OCI-LY7 (cell line): ENCODE measurements at regions of chr10 and their contacts with region 1.

Region 1: GRCh38 chr10:97334370-97335175 is at the start of gene FRAT2:
- DNase-seq: peak; percentile 93
- H3K4me3 ChIP-seq: peak within 1 kb of the TSS; percentile 76
- H3K27ac ChIP-seq: peak within 1 kb of the TSS; percentile 54
- H3K4me1 ChIP-seq: peaks cover 48% of the 10 kb centered on the region
- CTCF ChIP-seq: no peak
- total RNA-seq, gene FRAT2: 9.3 and 12.3 TPM in 2 replicates

Region 2: DNA sequence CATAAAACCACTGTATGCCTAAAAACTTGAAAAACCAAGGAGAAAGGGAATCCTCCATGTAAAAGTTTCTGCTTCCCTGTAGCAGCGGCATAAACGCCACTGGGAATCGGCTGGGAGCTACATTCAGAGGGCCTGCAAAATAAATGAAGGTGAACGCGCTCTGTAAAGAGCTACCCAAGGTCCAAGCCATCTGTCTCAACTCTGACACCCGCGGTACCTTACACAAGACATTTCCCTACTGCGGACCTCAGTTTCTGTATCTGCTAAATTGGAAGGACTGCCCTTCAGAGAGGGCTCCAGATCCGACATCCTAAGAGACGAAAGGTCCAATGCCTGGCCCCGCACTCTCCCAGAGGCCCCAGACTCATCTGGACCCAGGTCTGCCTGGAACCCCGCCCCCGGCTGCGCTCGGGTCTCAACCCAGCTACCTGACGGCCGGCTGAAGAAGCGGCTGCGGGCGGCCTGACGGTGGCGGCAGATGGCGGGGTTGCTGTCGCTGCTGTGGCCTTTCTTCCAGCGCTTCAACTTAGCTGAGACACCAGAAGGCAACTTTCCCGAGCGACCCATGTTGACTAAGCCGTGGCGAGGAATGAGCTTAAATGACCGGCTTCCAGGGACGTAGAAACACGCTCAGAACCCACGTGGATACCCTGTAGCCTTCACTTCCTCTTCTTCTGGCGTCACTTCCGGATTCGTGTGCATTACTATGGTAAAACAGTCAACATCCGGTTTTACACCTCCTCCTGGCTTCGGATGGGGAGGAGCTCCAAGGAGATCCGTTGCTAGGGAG is 66.3 kb after region 1 on chr10 and contains the start of gene RRP12:
- CTCF ChIA-PET with region 1: no interaction called
- POLR2A ChIA-PET with region 1: interaction called, 6 read pairs
- intact Hi-C with region 1: loop called (anchors 5 kb)
- DNase-seq: peak; percentile 98
- H3K4me3 ChIP-seq: peak within 1 kb of the TSS; percentile 84
- H3K27ac ChIP-seq: peak within 1 kb of the TSS; percentile 50
- H3K4me1 ChIP-seq: peaks cover 5% of the 10 kb centered on the region
- CTCF ChIP-seq: peak; percentile 60
- total RNA-seq, gene RRP12: 32.1 and 38.6 TPM in 2 replicates

Region 3: GRCh38 chr10:97921581-97922021 is 587.0 kb after region 1 on chr10:
- CTCF ChIA-PET with region 1: no interaction called
- POLR2A ChIA-PET with region 1: no interaction called
- intact Hi-C with region 1: no loop called
- DNase-seq: no peak
- H3K4me3 ChIP-seq: no peak overlapping the region
- H3K27ac ChIP-seq: no peak overlapping the region
- H3K4me1 ChIP-seq: no peaks in the 10 kb centered on the region
- CTCF ChIP-seq: no peak